ENCODE measurements at regions of chr22 and their contacts with region 1.

Region 1: DNA sequence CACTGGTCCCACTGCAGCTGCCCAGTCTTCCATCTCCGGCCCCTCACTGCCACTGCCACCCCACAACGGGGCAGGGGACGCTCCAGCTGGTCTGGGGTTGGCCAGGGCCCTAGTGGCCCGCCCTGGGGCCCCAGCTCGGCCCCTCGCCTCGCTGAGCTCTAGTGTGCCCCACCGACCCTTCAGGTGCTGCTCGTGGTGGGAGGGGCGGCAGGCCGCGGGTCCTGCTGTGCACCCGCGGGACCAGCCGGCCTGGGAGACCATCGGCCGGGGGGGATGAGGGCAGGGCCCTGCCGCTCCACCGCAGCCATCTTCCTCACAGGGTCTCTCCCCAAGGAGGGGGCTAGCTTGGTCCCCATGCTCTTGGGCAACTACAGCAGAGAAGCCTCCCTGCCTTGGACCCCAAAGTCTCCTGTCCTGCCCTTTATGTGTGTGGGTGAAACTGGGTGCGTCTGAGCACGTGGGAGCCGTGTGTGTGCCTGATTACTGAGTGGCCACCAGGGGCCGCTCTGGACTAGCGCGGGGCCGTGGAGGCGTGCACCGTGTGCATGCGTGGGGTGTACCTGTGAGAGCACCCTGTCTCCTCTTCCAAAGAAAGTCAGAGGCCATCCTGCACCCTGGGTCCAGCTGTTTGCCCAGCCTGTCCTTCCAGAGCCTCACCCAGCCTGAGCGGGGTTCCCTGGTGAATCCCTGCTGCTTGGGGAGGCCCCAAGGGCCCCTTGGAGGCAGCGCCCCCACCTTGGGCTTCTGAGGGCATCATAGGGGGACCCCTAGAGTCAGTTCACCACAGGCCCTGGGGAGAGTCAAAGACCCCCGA is 6.0 kb upstream of the ACR start:
- DNase-seq: peak in 1 of 2 experiments; percentile 62
- H3K4me3 ChIP-seq: peak overlapping the region in 1 of 4 experiments; percentile 41; a peak in 1 of 8 replicates
- H3K27ac ChIP-seq: no peak overlapping the region
- H3K4me1 ChIP-seq: peaks cover 0 to 5% (median 0%) of the 10 kb centered on the region in 4 experiments; a peak in 3 of 7 replicates
- H3K27me3 ChIP-seq: peaks cover 21 to 69% (median 52%) of the 10 kb centered on the region in 4 experiments
- CTCF ChIP-seq: peak; percentile 50 to 86 (median 85); a peak in 3 of 4 replicates
- EP300 ChIP-seq: no peak
- POLR2A ChIP-seq: no peak
- RAD21 ChIP-seq: peak; percentile 59 to 77

Region 2: GRCh38 chr22:50713571-50714056 is 18.4 kb before region 1 on chr22:
- CTCF ChIA-PET with region 1: interaction called, 12 read pairs
- POLR2A ChIA-PET with region 1: no interaction called
- DNase-seq: no peak
- H3K4me3 ChIP-seq: no peak overlapping the region
- H3K27ac ChIP-seq: no peak overlapping the region
- H3K4me1 ChIP-seq: no peaks in the 10 kb centered on the region
- H3K27me3 ChIP-seq: peaks cover 0 to 8% (median 5%) of the 10 kb centered on the region in 4 experiments; a peak in 6 of 7 replicates
- CTCF ChIP-seq: no peak
- EP300 ChIP-seq: no peak
- POLR2A ChIP-seq: no peak
- RAD21 ChIP-seq: no peak

Region 3: GRCh38 chr22:50720301-50720845 is 11.6 kb before region 1 on chr22:
- CTCF ChIA-PET with region 1: interaction called, 24 read pairs
- POLR2A ChIA-PET with region 1: interaction called, 4 read pairs
- DNase-seq: no peak
- H3K4me3 ChIP-seq: peak overlapping the region in 2 of 4 experiments; percentile 5 to 56; a peak in 6 of 8 replicates
- H3K27ac ChIP-seq: no peak overlapping the region
- H3K4me1 ChIP-seq: peaks cover 0 to 6% (median 0%) of the 10 kb centered on the region in 4 experiments; a peak in 2 of 7 replicates
- H3K27me3 ChIP-seq: peaks cover 31 to 66% (median 51%) of the 10 kb centered on the region in 4 experiments
- CTCF ChIP-seq: no peak; a peak in 1 of 4 replicates
- EP300 ChIP-seq: no peak
- POLR2A ChIP-seq: no peak
- RAD21 ChIP-seq: no peak

Measured in H1 (cell line).